GM23248 (cell line): ENCODE measurements at regions of chr20 and their contacts with region 1.

Region 1: GRCh38 chr20:52083627-52084232 is 107.8 kb downstream of the ZFP64 start:
- DNase-seq: peak; percentile 79
- H3K4me3 ChIP-seq: no peak overlapping the region
- H3K27ac ChIP-seq: no peak overlapping the region
- H3K4me1 ChIP-seq: no peaks in the 10 kb centered on the region
- H3K27me3 ChIP-seq: no peaks in the 10 kb centered on the region

Region 2: GRCh38 chr20:50987592-50988210 is 1096.0 kb before region 1 on chr20:
- in situ Hi-C with region 1: loop called (anchors 25 kb)
- DNase-seq: peak; percentile 89
- H3K4me3 ChIP-seq: 0 out of 2 replicates have a peak overlapping the region, but pooled peaks have one; percentile 21
- H3K27ac ChIP-seq: no peak overlapping the region
- H3K4me1 ChIP-seq: peaks cover under 1% of the 10 kb centered on the region; the same call in 1 of the 2 replicates
- H3K27me3 ChIP-seq: no peaks in the 10 kb centered on the region

Region 3: GRCh38 chr20:51385646-51386530 is 697.8 kb before region 1 on chr20:
- in situ Hi-C with region 1: loop called (anchors 25 kb)
- DNase-seq: peak; percentile 61
- H3K4me3 ChIP-seq: no peak overlapping the region
- H3K27ac ChIP-seq: no peak overlapping the region
- H3K4me1 ChIP-seq: peaks cover 32% of the 10 kb centered on the region
- H3K27me3 ChIP-seq: no peaks in the 10 kb centered on the region

Region 4: DNA sequence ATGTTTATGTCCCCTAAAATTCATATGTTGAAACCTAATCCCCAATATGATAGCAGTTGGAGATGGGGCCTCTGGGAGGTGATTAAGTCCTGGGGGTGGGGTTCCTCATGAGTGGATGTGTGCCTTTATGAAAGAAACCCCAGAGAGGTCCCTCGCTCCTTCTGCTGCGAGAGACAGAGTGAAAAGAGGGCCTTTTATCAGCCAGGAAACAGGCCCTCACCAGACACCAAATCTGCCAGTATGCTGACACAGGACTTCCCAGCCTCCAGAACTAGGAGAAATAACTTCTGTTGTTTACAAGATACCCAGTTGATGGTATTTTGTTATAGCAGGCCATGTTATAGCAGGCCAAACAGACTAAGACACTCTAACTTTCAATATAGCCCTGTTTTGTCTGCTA is 440.3 kb before region 1 on chr20:
- in situ Hi-C with region 1: loop called (anchors 10 kb)
- DNase-seq: no peak
- H3K4me3 ChIP-seq: no peak overlapping the region
- H3K27ac ChIP-seq: no peak overlapping the region
- H3K4me1 ChIP-seq: no peaks in the 10 kb centered on the region
- H3K27me3 ChIP-seq: no peaks in the 10 kb centered on the region

Region 5: GRCh38 chr20:51769976-51770615 is 313.6 kb before region 1 on chr20:
- in situ Hi-C with region 1: loop called (anchors 10 kb)
- DNase-seq: peak; percentile 29
- H3K4me3 ChIP-seq: no peak overlapping the region
- H3K27ac ChIP-seq: no peak overlapping the region
- H3K4me1 ChIP-seq: no peaks in the 10 kb centered on the region
- H3K27me3 ChIP-seq: no peaks in the 10 kb centered on the region